Uterus (tissue), 4 donors: ENCODE measurements at regions of chr18 and their contacts with region 1.

Region 1: DNA sequence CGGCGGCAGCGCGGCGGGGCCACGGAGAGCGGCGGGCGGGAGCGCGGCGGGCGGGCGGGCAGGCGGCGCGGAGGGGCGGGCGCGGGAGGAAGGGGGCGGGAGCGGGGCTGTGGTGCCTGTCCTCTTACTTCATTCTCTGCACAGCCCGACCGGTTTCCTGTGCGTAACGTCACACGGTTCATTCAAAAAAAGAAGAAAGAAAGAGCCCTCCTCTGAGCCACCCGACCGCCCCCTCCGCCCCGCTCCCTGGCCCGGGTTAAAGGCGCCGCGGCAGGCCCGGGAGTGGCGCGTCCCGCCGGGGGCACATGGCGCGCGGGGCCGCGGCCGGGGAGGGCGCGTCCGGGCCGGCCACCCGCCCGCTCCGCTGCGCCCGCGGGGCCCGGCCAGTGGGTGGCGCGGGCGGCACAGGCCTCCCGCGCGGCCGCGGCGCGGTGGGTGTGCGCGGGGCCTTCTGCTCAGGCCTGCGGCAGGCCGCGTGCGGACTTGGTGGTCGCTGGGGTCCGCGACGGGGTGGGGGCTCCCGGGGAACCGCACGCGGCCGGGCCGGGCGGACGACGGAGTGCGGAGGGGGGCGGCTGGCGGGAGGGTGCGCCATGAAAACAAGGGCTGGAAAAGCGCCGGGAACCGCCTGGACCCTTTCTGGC is 599 bp upstream of the BCL2 start:
- DNase-seq: peak; percentile 82 to 87
- H3K4me3 ChIP-seq: peak overlapping the region; percentile 76 to 90
- H3K27ac ChIP-seq: peak overlapping the region; percentile 89 to 98
- H3K4me1 ChIP-seq: no peaks in the 10 kb centered on the region
- H3K27me3 ChIP-seq: no peaks in the 10 kb centered on the region
- CTCF ChIP-seq: peak in 3 of 4 experiments; percentile 22 to 64 (median 31)
- POLR2A ChIP-seq: peak; percentile 3 to 24

Region 2: GRCh38 chr18:62964432-62964831 is 355.7 kb before region 1 on chr18:
- intact Hi-C with region 1: no loop called
- DNase-seq: no peak
- H3K4me3 ChIP-seq: no peak overlapping the region
- H3K27ac ChIP-seq: no peak overlapping the region
- H3K4me1 ChIP-seq: no peaks in the 10 kb centered on the region
- H3K27me3 ChIP-seq: no peaks in the 10 kb centered on the region
- CTCF ChIP-seq: no peak
- POLR2A ChIP-seq: no peak

Region 3: GRCh38 chr18:63025251-63026090 is 294.7 kb before region 1 on chr18:
- intact Hi-C with region 1: loop called (anchors 5 kb)
- DNase-seq: peak; percentile 43 to 63
- H3K4me3 ChIP-seq: no peak overlapping the region
- H3K27ac ChIP-seq: no peak overlapping the region
- H3K4me1 ChIP-seq: no peaks in the 10 kb centered on the region
- H3K27me3 ChIP-seq: no peaks in the 10 kb centered on the region
- CTCF ChIP-seq: peak; percentile 29 to 67 (median 54)
- POLR2A ChIP-seq: no peak

Region 4: DNA sequence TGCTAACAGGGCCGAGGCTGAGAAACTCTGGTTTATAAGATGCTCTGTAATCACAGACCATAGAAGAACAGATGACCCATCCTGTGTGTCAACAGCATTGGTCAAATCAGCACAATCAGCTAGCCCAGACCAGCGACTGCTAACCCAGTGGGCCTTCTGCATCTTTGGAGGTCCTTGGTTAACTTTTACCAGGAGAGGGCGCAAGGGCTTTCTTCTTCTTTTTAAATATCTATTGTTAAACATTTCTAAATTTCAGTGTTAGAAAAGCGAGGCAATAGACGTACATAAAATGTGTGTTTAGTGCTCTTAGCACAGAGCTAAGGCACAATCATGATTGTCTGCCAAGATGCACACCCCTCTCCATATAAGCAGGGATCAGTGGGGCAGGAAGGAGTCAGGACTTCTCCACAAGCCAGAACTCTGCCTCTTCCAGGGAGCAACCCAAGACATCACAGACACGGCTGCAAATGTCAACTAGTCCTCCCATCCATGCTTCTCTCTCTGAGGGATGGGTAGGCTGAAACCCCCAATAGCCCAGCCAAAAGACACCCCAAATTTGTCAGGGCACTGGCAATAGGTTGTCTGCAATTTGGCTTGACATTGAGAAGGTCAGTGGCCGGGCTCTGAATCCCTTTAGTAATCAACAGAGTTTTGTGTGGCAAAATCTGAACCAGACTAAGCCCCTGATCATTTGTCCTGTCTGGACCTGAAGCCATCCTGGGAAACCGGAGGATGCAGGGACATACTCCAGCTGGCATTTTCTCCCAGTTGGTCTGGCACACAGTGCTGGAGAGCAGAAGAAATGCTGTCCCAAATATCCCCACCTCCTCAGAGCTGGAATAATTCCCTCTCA is 188.8 kb before region 1 on chr18:
- intact Hi-C with region 1: loop called (anchors 5 kb)
- DNase-seq: peak; percentile 51 to 84
- H3K4me3 ChIP-seq: no peak overlapping the region
- H3K27ac ChIP-seq: peak overlapping the region; percentile 44 to 67
- H3K4me1 ChIP-seq: no peaks in the 10 kb centered on the region
- H3K27me3 ChIP-seq: no peaks in the 10 kb centered on the region
- CTCF ChIP-seq: peak; percentile 68 to 72 (median 72)
- POLR2A ChIP-seq: no peak

Region 5: GRCh38 chr18:63249771-63250170 is 70.4 kb before region 1 on chr18:
- intact Hi-C with region 1: loop called (anchors 10 kb)
- DNase-seq: peak in 1 of 2 donors; percentile 50
- H3K4me3 ChIP-seq: no peak overlapping the region
- H3K27ac ChIP-seq: peak overlapping the region; percentile 0 to 93
- H3K4me1 ChIP-seq: peaks cover 4 to 10% of the 10 kb centered on the region in 2 donors
- H3K27me3 ChIP-seq: no peaks in the 10 kb centered on the region
- CTCF ChIP-seq: no peak
- POLR2A ChIP-seq: no peak